Caco-2 (cell line): ENCODE measurements at regions of chr17 and their contacts with region 1.

Region 1: DNA sequence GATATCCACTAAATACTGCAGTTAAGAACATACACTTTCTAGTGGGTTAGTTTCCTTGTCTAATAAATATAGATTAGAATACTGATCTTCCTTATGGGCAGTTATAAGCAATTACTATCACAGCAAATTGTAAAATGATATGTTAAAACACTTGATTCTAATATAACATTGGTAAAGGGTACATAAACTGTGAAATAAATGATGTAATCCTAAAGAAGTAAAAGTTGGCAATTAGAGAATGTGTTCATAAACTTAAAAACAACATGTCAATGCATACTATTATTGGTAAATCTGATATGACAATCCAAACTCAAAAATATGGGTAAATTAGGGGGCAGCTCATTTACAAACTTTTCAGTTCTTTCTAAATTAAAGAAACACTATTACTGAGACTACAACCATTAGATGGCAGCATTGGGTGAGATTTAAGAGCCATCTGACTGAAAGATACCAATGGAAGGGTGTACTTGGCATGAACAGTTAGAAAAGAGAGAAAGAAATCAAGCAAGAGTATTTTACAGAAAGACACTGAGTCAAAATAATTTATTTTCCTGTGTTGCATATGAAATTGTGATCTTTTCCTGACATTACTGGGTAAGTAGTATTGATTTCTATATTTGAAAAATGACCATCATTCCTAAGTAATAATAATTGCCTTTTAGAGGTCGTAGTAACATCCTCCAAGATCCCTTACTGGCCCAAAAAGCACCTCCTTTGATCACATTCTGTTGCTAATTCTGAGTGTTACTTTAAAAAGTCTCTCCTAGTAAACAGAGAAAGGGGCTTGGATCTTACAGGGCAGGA is 119.6 kb downstream of the SPAG9 start:
- DNase-seq: peak in 1 of 2 experiments; percentile 66
- H3K4me3 ChIP-seq: no peak overlapping the region
- H3K4me3 Mint-ChIP-seq: no peak overlapping the region
- H3K27ac Mint-ChIP-seq: no peak overlapping the region
- H3K4me1 ChIP-seq: no peaks in the 10 kb centered on the region
- H3K4me1 Mint-ChIP-seq: peaks cover 6% of the 10 kb centered on the region
- H3K27me3 ChIP-seq: no peaks in the 10 kb centered on the region
- H3K27me3 Mint-ChIP-seq: no peaks in the 10 kb centered on the region
- CTCF ChIP-seq: peak in 1 of 2 experiments; percentile 37

Region 2: DNA sequence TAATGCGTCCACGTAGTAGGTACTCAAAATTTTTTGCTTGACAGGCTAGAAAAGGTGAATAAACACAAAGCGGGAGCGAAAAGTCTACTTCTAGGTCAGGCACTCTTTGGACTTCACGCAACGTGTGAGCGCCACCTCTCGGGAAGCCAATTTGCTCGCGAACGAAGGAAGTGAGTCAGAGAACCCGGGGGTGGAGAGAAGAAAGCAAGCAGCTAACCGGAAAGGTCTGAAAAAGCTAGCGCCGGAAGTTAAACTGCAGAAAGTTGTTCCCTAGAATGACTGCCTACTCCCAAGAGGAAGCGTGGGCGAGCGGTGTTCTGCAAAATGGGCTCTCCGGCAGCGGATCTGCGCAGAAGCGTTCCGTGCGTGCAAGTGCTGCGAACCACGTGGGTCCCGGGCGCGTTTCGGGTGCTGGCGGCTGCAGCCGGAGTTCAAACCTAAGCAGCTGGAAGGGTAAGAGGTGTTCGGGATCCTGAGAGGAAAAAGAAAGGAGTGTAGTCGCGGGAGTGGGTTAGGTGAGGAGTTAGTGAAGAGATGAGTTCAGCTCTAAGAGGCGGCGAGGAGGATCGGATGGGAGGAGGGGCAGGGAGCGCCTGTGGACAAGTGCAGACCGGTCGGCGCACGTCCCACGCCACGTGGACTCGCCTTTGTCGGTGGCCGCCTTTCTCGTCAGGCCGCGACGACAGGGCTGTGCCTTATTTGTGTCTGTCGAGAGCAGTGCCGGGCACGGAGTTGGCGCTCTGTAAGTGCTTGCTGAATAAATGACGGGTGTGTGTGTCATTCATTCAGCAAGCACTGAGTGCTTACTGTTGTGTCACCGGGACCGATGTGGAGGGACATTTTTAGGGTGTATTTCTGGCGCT is 152.4 kb after region 1 on chr17 and contains the start of gene NME1:
- CTCF ChIA-PET with region 1: interaction called, 11 read pairs
- POLR2A ChIA-PET with region 1: no interaction called
- intact Hi-C with region 1: loop called (anchors 1 kb)
- DNase-seq: peak; percentile 98 to 99
- H3K4me3 ChIP-seq: peak within 1 kb of the TSS; percentile 69
- H3K4me3 Mint-ChIP-seq: no peak within 1 kb of the TSS
- H3K27ac Mint-ChIP-seq: no peak within 1 kb of the TSS
- H3K4me1 ChIP-seq: peaks cover 9% of the 10 kb centered on the region
- H3K4me1 Mint-ChIP-seq: no peaks in the 10 kb centered on the region
- H3K27me3 ChIP-seq: no peaks in the 10 kb centered on the region
- H3K27me3 Mint-ChIP-seq: no peaks in the 10 kb centered on the region
- CTCF ChIP-seq: peak; percentile 65 to 89
- total RNA-seq, gene NME1: 278 and 336 TPM in 2 replicates

Region 3: DNA sequence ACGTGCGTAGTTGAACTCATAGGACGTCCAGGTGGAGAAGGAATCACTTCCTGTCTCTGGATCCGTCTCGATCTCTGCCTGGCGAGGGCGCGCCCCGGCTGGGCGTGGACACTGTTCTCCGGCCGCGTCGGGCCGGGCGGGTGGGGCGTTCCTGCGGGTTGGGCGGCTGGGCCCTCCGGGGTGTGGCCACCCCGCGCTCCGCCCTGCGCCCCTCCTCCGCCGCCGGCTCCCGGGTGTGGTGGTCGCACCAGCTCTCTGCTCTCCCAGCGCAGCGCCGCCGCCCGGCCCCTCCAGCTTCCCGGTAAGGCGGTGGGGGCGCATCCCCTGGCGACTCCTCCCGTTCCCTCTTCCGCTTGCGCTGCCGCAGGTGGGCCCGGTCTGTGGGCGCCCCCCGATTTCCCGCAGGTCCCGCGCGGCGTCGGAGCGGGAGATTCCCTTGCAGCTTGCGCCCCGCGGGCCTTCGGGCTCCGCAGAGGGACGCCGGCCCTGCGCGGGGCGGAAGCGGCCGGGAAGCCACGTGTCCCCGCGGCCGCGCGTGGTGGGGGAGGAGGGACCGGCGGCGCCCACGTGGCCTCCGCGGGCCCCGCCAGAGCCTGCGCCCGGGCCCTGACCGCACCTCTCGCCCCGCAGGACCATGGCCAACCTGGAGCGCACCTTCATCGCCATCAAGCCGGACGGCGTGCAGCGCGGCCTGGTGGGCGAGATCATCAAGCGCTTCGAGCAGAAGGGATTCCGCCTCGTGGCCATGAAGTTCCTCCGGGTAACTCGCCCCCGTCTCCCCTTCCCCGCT is 165.4 kb after region 1 on chr17 and contains the start of gene NME2:
- CTCF ChIA-PET with region 1: interaction called, 3 read pairs
- POLR2A ChIA-PET with region 1: no interaction called
- intact Hi-C with region 1: loop called (anchors 1 kb)
- DNase-seq: peak; percentile 94 to 96
- H3K4me3 ChIP-seq: peak within 1 kb of the TSS; percentile 91
- H3K4me3 Mint-ChIP-seq: peak within 1 kb of the TSS; percentile 98
- H3K27ac Mint-ChIP-seq: peak within 1 kb of the TSS; percentile 97
- H3K4me1 ChIP-seq: peaks cover 21% of the 10 kb centered on the region
- H3K4me1 Mint-ChIP-seq: peaks cover 10% of the 10 kb centered on the region
- H3K27me3 ChIP-seq: no peaks in the 10 kb centered on the region
- H3K27me3 Mint-ChIP-seq: no peaks in the 10 kb centered on the region
- CTCF ChIP-seq: peak in 1 of 2 experiments; percentile 2
- total RNA-seq, gene NME2: 734 and 821 TPM in 2 replicates

Region 4: DNA sequence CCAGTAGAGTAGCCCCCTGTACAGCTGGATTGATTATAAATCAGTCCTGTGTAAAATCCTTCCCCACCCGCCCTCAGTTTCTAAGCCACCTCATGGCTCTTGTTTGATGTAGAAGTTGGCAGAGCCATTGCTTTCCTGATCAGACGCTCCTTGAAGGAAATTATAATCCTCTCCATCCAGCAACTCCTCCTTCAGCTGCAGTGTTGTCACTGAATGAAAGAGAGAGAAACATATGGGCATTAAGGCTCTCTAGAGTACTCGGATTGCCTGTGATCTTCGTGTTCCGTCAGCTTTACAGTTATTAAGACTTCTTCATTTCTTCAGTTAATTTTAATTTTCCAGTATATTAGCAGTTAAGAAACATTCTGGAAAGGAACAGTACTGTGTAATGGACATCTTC is 179.4 kb after region 1 on chr17:
- CTCF ChIA-PET with region 1: no interaction called
- POLR2A ChIA-PET with region 1: no interaction called
- intact Hi-C with region 1: no loop called
- DNase-seq: no peak
- H3K4me3 ChIP-seq: no peak overlapping the region
- H3K4me3 Mint-ChIP-seq: no peak overlapping the region
- H3K27ac Mint-ChIP-seq: no peak overlapping the region
- H3K4me1 ChIP-seq: no peaks in the 10 kb centered on the region
- H3K4me1 Mint-ChIP-seq: no peaks in the 10 kb centered on the region
- H3K27me3 ChIP-seq: no peaks in the 10 kb centered on the region
- H3K27me3 Mint-ChIP-seq: no peaks in the 10 kb centered on the region
- CTCF ChIP-seq: no peak

Region 5: DNA sequence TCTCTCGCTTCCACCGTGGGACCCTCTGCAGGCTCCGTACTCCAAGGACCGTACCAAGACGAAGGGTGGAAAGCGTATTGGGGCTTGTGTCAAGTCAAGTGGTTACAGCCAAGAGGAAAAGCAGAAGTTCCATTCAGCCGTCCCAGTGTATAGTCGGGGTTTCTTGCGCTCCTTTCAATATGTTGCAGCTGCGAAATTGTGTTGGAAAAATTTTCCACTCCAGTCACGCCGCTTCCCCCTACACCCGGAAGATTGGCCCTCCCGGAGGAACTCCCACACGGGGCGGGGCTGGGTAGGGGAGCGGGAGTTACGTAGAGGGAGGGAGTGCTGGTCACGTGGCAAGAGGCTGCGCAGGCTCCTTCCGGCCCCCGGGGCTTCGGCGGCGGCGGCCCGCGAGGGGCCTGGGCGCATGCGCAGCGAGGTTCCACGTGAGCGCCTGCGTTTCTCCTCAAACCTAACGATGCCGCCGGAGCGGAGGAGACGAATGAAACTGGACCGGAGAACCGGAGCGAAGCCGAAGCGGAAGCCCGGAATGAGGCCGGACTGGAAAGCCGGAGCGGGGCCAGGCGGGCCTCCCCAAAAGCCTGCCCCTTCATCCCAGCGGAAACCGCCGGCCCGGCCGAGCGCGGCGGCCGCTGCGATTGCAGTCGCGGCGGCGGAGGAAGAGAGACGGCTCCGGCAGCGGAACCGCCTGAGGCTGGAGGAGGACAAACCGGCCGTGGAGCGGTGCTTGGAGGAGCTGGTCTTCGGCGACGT is 259.3 kb after region 1 on chr17 and contains the start of gene UTP18:
- CTCF ChIA-PET with region 1: no interaction called
- POLR2A ChIA-PET with region 1: no interaction called
- intact Hi-C with region 1: loop called (anchors 10 kb)
- DNase-seq: peak; percentile 98 to 99
- H3K4me3 ChIP-seq: peak within 1 kb of the TSS; percentile 87
- H3K4me3 Mint-ChIP-seq: peak within 1 kb of the TSS; percentile 66
- H3K27ac Mint-ChIP-seq: peak within 1 kb of the TSS; percentile 97
- H3K4me1 ChIP-seq: peaks cover 5% of the 10 kb centered on the region; the same call in 1 of the 2 replicates
- H3K4me1 Mint-ChIP-seq: peaks cover 29% of the 10 kb centered on the region
- H3K27me3 ChIP-seq: no peaks in the 10 kb centered on the region
- H3K27me3 Mint-ChIP-seq: no peaks in the 10 kb centered on the region
- CTCF ChIP-seq: no peak
- total RNA-seq, gene UTP18: 55.3 and 63.4 TPM in 2 replicates